ENCODE measurements at regions of chr21 and their contacts with region 1.

Region 1: GRCh38 chr21:29449306-29449950 is 150.7 kb downstream of the BACH1 start:
- DNase-seq: peak in 5 of 14 experiments; percentile 11 to 87 (median 63)
- ATAC-seq: peak; percentile 86
- H3K4me3 ChIP-seq: peak overlapping the region; percentile 1
- H3K4me3 Mint-ChIP-seq: peak overlapping the region; percentile 39
- H3K27ac ChIP-seq: peak overlapping the region; percentile 56 to 67
- H3K27ac Mint-ChIP-seq: peak overlapping the region; percentile 94
- H3K4me1 ChIP-seq: peaks cover 14% of the 10 kb centered on the region
- H3K4me1 Mint-ChIP-seq: peaks cover 40% of the 10 kb centered on the region
- H3K27me3 ChIP-seq: no peaks in the 10 kb centered on the region
- H3K27me3 Mint-ChIP-seq: no peaks in the 10 kb centered on the region
- CTCF ChIP-seq: peak; percentile 15

Region 2: GRCh38 chr21:29181799-29182470 is 267.5 kb before region 1 on chr21:
- CTCF ChIA-PET with region 1: no interaction called
- POLR2A ChIA-PET with region 1: no interaction called
- intact Hi-C with region 1: no loop called
- DNase-seq: peak in 1 of 14 experiments; percentile 22
- ATAC-seq: no peak
- H3K4me3 ChIP-seq: no peak overlapping the region
- H3K4me3 Mint-ChIP-seq: no peak overlapping the region
- H3K27ac ChIP-seq: no peak overlapping the region
- H3K27ac Mint-ChIP-seq: no peak overlapping the region
- H3K4me1 ChIP-seq: no peaks in the 10 kb centered on the region
- H3K4me1 Mint-ChIP-seq: no peaks in the 10 kb centered on the region
- H3K27me3 ChIP-seq: no peaks in the 10 kb centered on the region
- H3K27me3 Mint-ChIP-seq: no peaks in the 10 kb centered on the region
- CTCF ChIP-seq: no peak

Region 3: GRCh38 chr21:29208044-29208681 is 241.3 kb before region 1 on chr21:
- CTCF ChIA-PET with region 1: no interaction called
- POLR2A ChIA-PET with region 1: no interaction called
- intact Hi-C with region 1: no loop called
- DNase-seq: no peak
- ATAC-seq: no peak
- H3K4me3 ChIP-seq: no peak overlapping the region
- H3K4me3 Mint-ChIP-seq: no peak overlapping the region
- H3K27ac ChIP-seq: no peak overlapping the region
- H3K27ac Mint-ChIP-seq: no peak overlapping the region
- H3K4me1 ChIP-seq: no peaks in the 10 kb centered on the region
- H3K4me1 Mint-ChIP-seq: no peaks in the 10 kb centered on the region
- H3K27me3 ChIP-seq: no peaks in the 10 kb centered on the region
- H3K27me3 Mint-ChIP-seq: peaks cover 6% of the 10 kb centered on the region
- CTCF ChIP-seq: no peak

Region 4: DNA sequence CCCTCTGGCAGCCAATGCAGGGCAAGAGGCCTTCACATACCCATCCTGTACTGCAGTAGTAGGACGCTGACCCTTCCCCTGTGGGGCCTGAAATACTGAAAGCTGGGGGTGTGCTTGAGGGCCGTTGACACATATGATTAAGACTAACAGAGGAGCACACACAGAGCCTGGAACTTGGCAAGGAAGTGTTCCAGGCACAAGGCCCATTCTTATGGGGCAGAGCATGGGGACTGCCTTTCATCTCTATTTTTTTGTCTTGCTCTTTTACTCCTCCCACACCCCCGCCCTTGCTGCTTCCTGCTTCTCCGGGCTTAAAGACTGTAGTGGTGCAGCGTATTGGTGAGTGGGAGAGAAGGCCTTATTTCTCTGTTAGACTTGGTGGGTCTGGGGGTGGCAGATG is 13.3 kb before region 1 on chr21:
- CTCF ChIA-PET with region 1: no interaction called
- POLR2A ChIA-PET with region 1: interaction called, 41 read pairs
- intact Hi-C with region 1: no loop called
- DNase-seq: peak in 13 of 14 experiments; percentile 23 to 71 (median 47)
- ATAC-seq: peak; percentile 94
- H3K4me3 ChIP-seq: peak overlapping the region; percentile 44
- H3K4me3 Mint-ChIP-seq: peak overlapping the region; percentile 76
- H3K27ac ChIP-seq: peak overlapping the region; percentile 37 to 41
- H3K27ac Mint-ChIP-seq: peak overlapping the region; percentile 83
- H3K4me1 ChIP-seq: peaks cover 16% of the 10 kb centered on the region
- H3K4me1 Mint-ChIP-seq: peaks cover 57% of the 10 kb centered on the region
- H3K27me3 ChIP-seq: no peaks in the 10 kb centered on the region
- H3K27me3 Mint-ChIP-seq: no peaks in the 10 kb centered on the region
- CTCF ChIP-seq: no peak

Region 5: DNA sequence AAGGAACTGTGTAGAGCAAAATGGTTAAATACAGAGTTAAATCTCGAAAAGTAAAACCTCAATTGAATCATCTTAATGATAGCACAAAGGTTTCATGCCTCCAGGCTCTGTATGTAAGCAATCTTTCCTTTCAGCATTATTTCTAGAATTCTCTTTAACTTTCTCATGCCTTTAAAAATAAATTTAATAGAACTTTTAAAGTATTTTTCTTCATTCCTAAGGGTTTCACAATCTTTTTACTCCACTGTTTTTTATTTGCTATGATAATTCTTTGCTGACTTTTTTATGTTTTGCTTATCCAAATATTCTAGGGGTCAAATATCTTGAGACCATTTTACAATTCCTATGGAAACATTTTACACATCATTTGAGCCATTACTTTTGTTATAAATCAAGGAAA is 137.3 kb after region 1 on chr21:
- CTCF ChIA-PET with region 1: no interaction called
- POLR2A ChIA-PET with region 1: no interaction called
- intact Hi-C with region 1: no loop called
- DNase-seq: no peak
- ATAC-seq: no peak
- H3K4me3 ChIP-seq: no peak overlapping the region
- H3K4me3 Mint-ChIP-seq: no peak overlapping the region
- H3K27ac ChIP-seq: no peak overlapping the region
- H3K27ac Mint-ChIP-seq: no peak overlapping the region
- H3K4me1 ChIP-seq: no peaks in the 10 kb centered on the region
- H3K4me1 Mint-ChIP-seq: no peaks in the 10 kb centered on the region
- H3K27me3 ChIP-seq: no peaks in the 10 kb centered on the region
- H3K27me3 Mint-ChIP-seq: peaks cover 11% of the 10 kb centered on the region
- CTCF ChIP-seq: no peak

Region 6: GRCh38 chr21:29786496-29787360 is 337.3 kb after region 1 on chr21:
- CTCF ChIA-PET with region 1: no interaction called
- POLR2A ChIA-PET with region 1: no interaction called
- intact Hi-C with region 1: no loop called
- DNase-seq: no peak
- ATAC-seq: no peak
- H3K4me3 ChIP-seq: no peak overlapping the region
- H3K4me3 Mint-ChIP-seq: no peak overlapping the region
- H3K27ac ChIP-seq: no peak overlapping the region
- H3K27ac Mint-ChIP-seq: no peak overlapping the region
- H3K4me1 ChIP-seq: no peaks in the 10 kb centered on the region
- H3K4me1 Mint-ChIP-seq: no peaks in the 10 kb centered on the region
- H3K27me3 ChIP-seq: no peaks in the 10 kb centered on the region
- H3K27me3 Mint-ChIP-seq: peaks cover 20% of the 10 kb centered on the region
- CTCF ChIP-seq: no peak

Measured in CD4-positive, alpha-beta T cell (primary cell).